A549 (cell line): ENCODE measurements at regions of chr12 and their contacts with region 1.

Region 1: DNA sequence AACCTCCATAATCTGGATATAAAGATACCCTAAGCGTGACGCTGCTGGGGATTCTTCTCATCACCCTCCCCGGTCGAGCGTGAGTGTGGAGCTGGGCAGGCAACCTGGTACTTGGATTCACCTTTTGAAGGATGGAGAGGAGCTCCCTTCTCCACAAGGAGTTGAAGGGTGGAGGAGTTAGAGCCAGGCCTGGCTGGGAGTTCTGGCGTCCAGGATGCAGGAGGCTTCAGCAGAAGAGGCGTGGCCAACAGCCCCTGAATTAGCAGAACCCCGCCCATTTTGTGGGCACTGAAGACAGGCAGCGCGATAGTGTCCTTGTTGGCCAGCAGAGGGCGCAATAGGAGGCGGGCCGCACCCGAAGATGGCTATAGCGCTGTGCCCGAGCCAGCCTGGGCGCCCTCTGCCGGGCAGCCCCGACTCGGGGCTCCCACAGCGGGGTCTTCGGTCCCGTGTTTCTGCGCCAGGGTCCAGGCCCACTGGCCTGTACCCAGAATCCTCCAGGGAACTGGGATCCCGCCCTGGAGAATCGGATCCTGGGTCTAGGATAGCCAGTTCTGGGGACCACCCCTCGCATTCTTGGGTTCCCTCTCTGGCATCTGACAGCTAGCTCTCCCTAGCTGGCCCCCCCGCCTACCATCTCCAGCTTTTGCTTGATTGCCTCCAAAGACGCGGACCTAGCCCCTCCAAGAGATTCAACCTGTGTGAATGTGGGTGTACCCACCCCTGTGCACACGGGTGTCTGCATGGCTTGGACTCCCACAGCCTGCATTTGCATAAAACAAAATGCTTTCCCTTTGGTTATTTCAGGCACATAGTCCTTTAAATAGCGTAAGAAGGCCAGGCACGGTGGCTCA is 26.0 kb upstream of the SMUG1 start:
- DNase-seq: peak; percentile 78 to 95
- ATAC-seq: peak; percentile 70 to 88
- H3K4me3 ChIP-seq: peak overlapping the region; percentile 35
- H3K27ac ChIP-seq: peak overlapping the region; percentile 27 to 77; a peak in 4 of 6 replicates
- H3K4me1 ChIP-seq: peaks cover 9% of the 10 kb centered on the region; the same call in 1 of the 3 replicates
- CTCF ChIP-seq: peak; percentile 100
- EP300 ChIP-seq: no peak
- POLR2A ChIP-seq: no peak
- RAD21 ChIP-seq: peak; percentile 38 to 67

Region 2: GRCh38 chr12:53999559-54000104 is 215.1 kb before region 1 on chr12:
- CTCF ChIA-PET with region 1: interaction called, 1,074 read pairs
- POLR2A ChIA-PET with region 1: no interaction called
- DNase-seq: peak; percentile 82 to 92
- ATAC-seq: peak; percentile 30 to 64; a peak in 5 of 6 replicates
- H3K4me3 ChIP-seq: peak overlapping the region; percentile 83
- H3K27ac ChIP-seq: peak overlapping the region; percentile 93 to 96
- H3K4me1 ChIP-seq: peaks cover 14% of the 10 kb centered on the region
- CTCF ChIP-seq: no peak
- EP300 ChIP-seq: no peak
- POLR2A ChIP-seq: no peak
- RAD21 ChIP-seq: no peak

Region 3: GRCh38 chr12:54017878-54018467 is 196.8 kb before region 1 on chr12:
- CTCF ChIA-PET with region 1: interaction called, 1,074 read pairs
- POLR2A ChIA-PET with region 1: interaction called, 3 read pairs
- DNase-seq: peak; percentile 92 to 93
- ATAC-seq: peak; percentile 70 to 79
- H3K4me3 ChIP-seq: peak overlapping the region; percentile 61
- H3K27ac ChIP-seq: peak overlapping the region; percentile 96 to 99
- H3K4me1 ChIP-seq: peaks cover 48% of the 10 kb centered on the region
- CTCF ChIP-seq: no peak
- EP300 ChIP-seq: no peak
- POLR2A ChIP-seq: peak; percentile 40
- RAD21 ChIP-seq: no peak

Region 4: DNA sequence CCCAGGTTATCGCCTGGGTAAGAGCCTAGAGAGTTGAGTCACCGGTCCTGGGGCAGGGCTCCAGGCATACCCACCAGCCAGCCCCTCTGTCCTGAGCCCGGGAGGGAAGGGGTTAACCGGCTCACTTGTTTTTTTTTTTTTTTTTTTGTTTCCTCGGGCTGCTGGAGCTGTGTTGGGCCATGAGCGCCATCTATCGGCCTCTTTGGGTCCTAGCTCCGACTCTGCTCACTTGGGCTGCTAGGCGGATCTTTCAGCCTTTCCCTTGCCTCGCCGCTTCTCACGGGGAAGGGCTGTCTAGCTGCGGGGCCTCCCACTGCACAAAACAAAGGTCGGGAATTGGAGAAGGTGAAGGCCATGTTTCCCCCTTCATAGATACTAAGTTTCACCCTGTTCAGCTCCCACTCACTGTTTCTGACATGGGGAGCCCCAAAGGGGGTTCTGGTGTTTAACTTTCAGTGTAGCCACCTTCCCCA is 23.2 kb before region 1 on chr12:
- CTCF ChIA-PET with region 1: interaction called, 200 read pairs
- POLR2A ChIA-PET with region 1: no interaction called
- DNase-seq: peak; percentile 87 to 92
- ATAC-seq: peak; percentile 71 to 84
- H3K4me3 ChIP-seq: no peak overlapping the region
- H3K27ac ChIP-seq: peak overlapping the region; percentile 10 to 70; a peak in 3 of 6 replicates
- H3K4me1 ChIP-seq: peaks cover 25% of the 10 kb centered on the region
- CTCF ChIP-seq: peak; percentile 79
- EP300 ChIP-seq: no peak
- POLR2A ChIP-seq: no peak
- RAD21 ChIP-seq: peak; percentile 90 to 92

Region 5: GRCh38 chr12:54229624-54230212 is 14.9 kb after region 1 on chr12:
- CTCF ChIA-PET with region 1: interaction called, 64 read pairs
- POLR2A ChIA-PET with region 1: no interaction called
- DNase-seq: peak; percentile 51 to 66
- ATAC-seq: peak; percentile 76 to 82
- H3K4me3 ChIP-seq: no peak overlapping the region
- H3K27ac ChIP-seq: peak overlapping the region; percentile 30 to 69; a peak in 4 of 6 replicates
- H3K4me1 ChIP-seq: peaks cover 22% of the 10 kb centered on the region
- CTCF ChIP-seq: no peak
- EP300 ChIP-seq: no peak
- POLR2A ChIP-seq: no peak
- RAD21 ChIP-seq: no peak

Region 6: DNA sequence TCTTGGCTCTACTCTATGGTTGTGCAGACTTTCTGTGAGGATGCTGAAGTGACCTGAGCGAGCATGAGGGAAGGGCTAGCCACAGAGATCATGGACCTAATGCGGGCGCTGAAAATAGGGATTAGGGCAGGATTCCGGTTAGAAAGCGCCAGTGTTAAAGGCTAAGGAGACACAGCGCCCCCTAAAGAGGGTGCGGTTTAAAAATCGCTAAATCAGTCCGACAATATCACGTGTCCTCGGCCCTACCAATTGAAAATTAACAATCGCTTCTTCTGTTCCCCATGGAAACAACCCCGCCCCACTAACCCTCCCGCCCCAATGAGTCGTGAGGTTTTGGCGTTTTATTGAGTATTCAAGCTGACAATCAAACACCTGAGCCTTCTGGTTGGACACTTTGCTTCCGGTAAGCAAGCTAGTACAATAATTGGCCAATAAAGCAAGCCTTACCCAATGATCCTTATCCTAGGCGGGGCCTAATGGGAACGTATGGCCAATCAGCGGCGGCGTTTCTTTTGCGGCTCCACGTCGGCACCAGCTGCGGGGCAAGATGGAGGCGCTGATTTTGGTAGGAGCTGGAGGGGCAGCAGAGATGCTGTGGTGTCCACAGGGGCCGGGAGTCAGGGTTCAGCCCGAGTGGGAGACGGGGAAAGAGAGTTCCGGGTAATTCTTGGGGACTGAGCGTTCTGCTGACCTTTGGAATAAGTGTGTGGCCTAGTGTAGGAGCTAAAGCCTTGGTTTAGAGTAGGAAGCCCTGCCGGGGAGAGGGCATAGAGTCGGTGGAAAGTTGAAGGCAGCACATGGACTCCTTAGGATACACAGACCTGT is 110.0 kb after region 1 on chr12 and contains the start of gene COPZ1:
- CTCF ChIA-PET with region 1: interaction called, 31 read pairs
- POLR2A ChIA-PET with region 1: interaction called, 5 read pairs
- DNase-seq: peak; percentile 98 to 100
- ATAC-seq: peak; percentile 97 to 98
- H3K4me3 ChIP-seq: peak within 1 kb of the TSS; percentile 74
- H3K27ac ChIP-seq: peak within 1 kb of the TSS; percentile 85 to 91
- H3K4me1 ChIP-seq: peaks cover 40% of the 10 kb centered on the region
- CTCF ChIP-seq: peak; percentile 96
- EP300 ChIP-seq: no peak
- POLR2A ChIP-seq: peak; percentile 87
- RAD21 ChIP-seq: peak; percentile 79 to 81
- polyA plus RNA-seq, gene COPZ1: 590 and 613 TPM in 2 replicates

Region 7: GRCh38 chr12:54368709-54369583 is 154.2 kb after region 1 on chr12:
- CTCF ChIA-PET with region 1: interaction called, 108 read pairs
- POLR2A ChIA-PET with region 1: no interaction called
- DNase-seq: peak; percentile 82 to 87
- ATAC-seq: peak; percentile 63 to 78
- H3K4me3 ChIP-seq: no peak overlapping the region
- H3K27ac ChIP-seq: peak overlapping the region; percentile 46 to 84
- H3K4me1 ChIP-seq: peaks cover 52% of the 10 kb centered on the region
- CTCF ChIP-seq: peak; percentile 91
- EP300 ChIP-seq: no peak
- POLR2A ChIP-seq: no peak
- RAD21 ChIP-seq: peak; percentile 86 to 94